ENCODE measurements at regions of chr17 and their contacts with region 1.

Region 1: DNA sequence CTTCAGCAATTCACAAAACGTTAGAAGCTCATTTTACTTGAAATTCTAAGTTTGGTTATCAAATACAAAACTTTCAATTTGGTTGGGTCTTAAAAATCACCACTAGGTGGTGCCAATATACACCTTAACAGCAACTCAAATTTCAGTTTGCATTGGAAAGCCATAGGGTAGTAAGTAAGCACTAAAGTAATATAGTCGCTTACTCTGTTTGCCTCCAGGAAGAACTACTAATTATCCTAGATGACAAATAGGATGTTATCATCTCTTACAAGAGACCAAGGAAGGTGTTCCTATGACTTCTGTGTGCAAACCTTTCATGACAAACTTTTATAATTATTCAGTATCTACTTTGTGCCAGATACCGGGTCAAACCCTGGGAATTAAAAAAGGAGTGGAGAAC is 93.3 kb downstream of the MYO1D start:
- DNase-seq: no peak
- ATAC-seq: peak; percentile 51
- H3K4me3 Mint-ChIP-seq: no peak overlapping the region
- H3K27ac Mint-ChIP-seq: no peak overlapping the region
- H3K4me1 Mint-ChIP-seq: no peaks in the 10 kb centered on the region
- H3K27me3 Mint-ChIP-seq: no peaks in the 10 kb centered on the region

Region 2: GRCh38 chr17:32909787-32910369 is 126.3 kb after region 1 on chr17:
- CTCF ChIA-PET with region 1: interaction called, 44 read pairs
- POLR2A ChIA-PET with region 1: interaction called, 3 read pairs
- intact Hi-C with region 1: loop called (anchors 1 kb)
- DNase-seq: peak; percentile 79
- ATAC-seq: peak; percentile 71
- H3K4me3 Mint-ChIP-seq: no peak overlapping the region
- H3K27ac Mint-ChIP-seq: no peak overlapping the region
- H3K4me1 Mint-ChIP-seq: peaks cover 9% of the 10 kb centered on the region
- H3K27me3 Mint-ChIP-seq: peaks cover 20% of the 10 kb centered on the region

Region 3: GRCh38 chr17:32997753-32998632 is 214.4 kb after region 1 on chr17:
- CTCF ChIA-PET with region 1: interaction called, 6 read pairs
- POLR2A ChIA-PET with region 1: no interaction called
- intact Hi-C with region 1: loop called in 1 of 2 experiments (anchors 2 kb)
- DNase-seq: peak; percentile 86
- ATAC-seq: peak; percentile 68
- H3K4me3 Mint-ChIP-seq: no peak overlapping the region
- H3K27ac Mint-ChIP-seq: no peak overlapping the region
- H3K4me1 Mint-ChIP-seq: peaks cover 4% of the 10 kb centered on the region
- H3K27me3 Mint-ChIP-seq: peaks cover 11% of the 10 kb centered on the region